Motor neuron (in vitro differentiated cells): ENCODE measurements at regions of chr19 and their contacts with region 1.

Region 1: GRCh38 chr19:44839276-44839675 is 6.8 kb upstream of the NECTIN2 start:
- ATAC-seq: no peak
- H3K4me3 ChIP-seq: no peak overlapping the region
- H3K27ac ChIP-seq: no peak overlapping the region
- H3K4me1 ChIP-seq: no peaks in the 10 kb centered on the region

Region 2: DNA sequence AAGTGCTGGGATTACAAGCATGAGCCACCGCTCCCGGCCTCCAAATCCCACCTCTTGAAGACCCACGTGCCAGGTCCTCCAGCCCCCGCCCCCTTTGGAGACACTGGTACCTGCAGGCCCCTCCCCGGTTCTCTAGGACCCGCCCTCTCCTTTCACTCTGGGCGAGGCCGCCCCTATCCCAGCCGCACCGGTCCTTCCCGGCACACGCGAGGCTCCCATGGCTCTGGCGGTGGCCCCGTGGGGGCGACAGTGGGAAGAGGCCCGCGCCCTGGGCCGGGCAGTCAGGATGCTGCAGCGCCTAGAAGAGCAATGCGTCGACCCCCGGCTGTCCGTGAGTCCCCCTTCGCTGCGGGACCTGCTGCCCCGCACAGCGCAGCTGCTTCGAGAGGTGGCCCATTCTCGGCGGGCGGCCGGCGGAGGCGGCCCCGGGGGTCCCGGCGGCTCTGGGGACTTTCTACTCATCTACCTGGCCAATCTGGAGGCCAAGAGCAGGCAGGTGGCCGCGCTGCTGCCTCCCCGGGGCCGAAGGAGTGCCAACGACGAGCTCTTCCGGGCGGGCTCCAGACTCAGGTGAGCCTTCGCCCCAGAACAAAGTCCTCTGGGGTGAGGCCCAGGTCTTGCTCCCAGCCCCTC is 61.4 kb before region 1 on chr19 and contains the start of gene CBLC:
- in situ Hi-C with region 1: loop called in 1 of 9 experiments (anchors 10 kb)
- ATAC-seq: peak in 6 of 8 experiments; percentile 65 to 91 (median 82)
- H3K4me3 ChIP-seq: no peak within 1 kb of the TSS
- H3K27ac ChIP-seq: no peak within 1 kb of the TSS
- H3K4me1 ChIP-seq: no peaks in the 10 kb centered on the region
- total RNA-seq, gene CBLC: not detected